Mammary epithelial cell (primary cell): ENCODE measurements at regions of chr4 and their contacts with region 1.

Region 1: GRCh38 chr4:168831919-168832762 is 177.9 kb downstream of the CBR4 start:
- DNase-seq: peak; percentile 86
- H3K4me3 ChIP-seq: peak overlapping the region; percentile 88 to 95 (median 95)
- H3K27ac ChIP-seq: peak overlapping the region; percentile 84
- H3K4me1 ChIP-seq: peaks cover 37% of the 10 kb centered on the region
- H3K27me3 ChIP-seq: no peaks in the 10 kb centered on the region
- CTCF ChIP-seq: no peak

Region 2: DNA sequence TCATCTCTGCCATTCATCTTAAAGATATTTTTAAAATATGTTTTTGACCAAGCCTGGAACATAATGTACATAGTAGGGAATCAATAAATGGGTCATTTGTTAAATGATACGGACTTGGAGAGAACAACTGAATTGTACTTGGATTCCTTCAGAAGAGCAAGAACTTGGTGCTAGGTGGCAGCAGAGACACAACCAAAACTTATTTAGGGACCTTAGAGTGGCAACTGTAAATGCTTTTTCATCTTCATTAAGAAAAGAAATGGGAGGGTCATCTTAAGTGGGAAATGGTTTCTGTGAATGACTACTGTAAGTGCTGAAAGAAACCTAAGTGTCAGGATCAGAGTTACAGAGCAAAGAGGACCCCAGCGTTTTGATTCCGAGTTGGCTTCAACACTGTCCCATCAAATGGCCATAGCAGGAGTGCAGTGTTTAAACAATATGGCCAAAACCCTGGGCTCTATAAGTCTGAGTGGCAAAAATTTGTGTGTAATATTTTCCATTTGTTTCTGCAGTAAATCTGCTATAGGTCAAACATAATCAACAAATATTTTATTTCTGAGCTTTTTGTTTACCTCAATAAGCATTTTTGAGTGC is 121.7 kb before region 1 on chr4:
- CTCF ChIA-PET with region 1: no interaction called
- dilution Hi-C with region 1: no loop called
- in situ Hi-C with region 1: no loop called
- intact Hi-C with region 1: loop called (anchors 1 kb)
- DNase-seq: peak; percentile 54
- H3K4me3 ChIP-seq: no peak overlapping the region
- H3K27ac ChIP-seq: no peak overlapping the region
- H3K4me1 ChIP-seq: peaks cover 33% of the 10 kb centered on the region
- H3K27me3 ChIP-seq: no peaks in the 10 kb centered on the region
- CTCF ChIP-seq: peak; percentile 49 to 74

Region 3: GRCh38 chr4:168758351-168758876 is 73.7 kb before region 1 on chr4:
- CTCF ChIA-PET with region 1: no interaction called
- dilution Hi-C with region 1: no loop called
- in situ Hi-C with region 1: no loop called
- intact Hi-C with region 1: loop called (anchors 2 kb)
- DNase-seq: peak; percentile 82
- H3K4me3 ChIP-seq: no peak overlapping the region
- H3K27ac ChIP-seq: peak overlapping the region; percentile 92
- H3K4me1 ChIP-seq: peaks cover 51% of the 10 kb centered on the region
- H3K27me3 ChIP-seq: no peaks in the 10 kb centered on the region
- CTCF ChIP-seq: no peak

Region 4: DNA sequence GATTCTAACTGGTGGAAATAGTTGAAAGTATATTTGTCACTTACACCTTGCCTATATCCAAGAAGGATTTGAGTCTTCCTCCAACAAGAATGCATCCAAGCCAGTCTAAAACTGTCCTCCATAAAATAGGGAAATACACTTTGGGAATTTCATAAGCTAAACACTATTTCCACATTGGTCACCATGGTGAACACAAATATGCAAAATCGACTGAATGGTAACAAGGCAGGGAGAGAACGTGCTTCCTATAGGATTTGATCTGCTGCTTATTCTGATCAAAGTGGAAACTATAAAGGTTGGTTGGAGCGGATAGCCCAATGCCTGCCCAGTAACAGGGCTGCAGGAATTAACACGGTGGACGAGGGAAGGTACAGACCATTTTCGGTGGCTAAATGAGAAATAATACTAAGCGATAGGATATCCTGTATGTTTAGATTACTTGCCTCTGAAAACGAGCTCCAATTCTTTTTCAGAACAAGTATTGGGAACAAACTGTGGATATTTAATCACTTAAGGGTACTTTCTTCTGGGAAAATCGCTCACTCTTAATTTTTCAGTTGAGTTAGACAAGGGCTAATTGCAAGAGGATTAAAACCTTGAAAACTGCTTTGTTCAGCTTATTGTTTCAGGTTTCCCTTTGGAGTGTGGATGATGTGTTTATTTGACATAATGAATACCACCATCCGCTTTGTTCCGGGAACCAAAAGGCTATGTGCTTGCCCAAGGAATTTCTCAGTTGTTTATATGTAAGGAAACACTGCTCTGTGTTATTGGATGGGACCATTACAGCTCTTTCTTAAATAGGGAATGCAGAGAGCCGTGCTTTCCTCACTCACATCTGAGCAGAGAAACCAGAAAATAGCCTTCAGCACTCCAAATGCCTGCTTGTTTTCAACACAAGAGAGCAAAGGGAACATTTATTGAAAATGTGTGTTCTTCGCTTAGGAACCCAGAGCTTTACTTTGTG is 16.5 kb before region 1 on chr4:
- CTCF ChIA-PET with region 1: interaction called, 3 read pairs
- dilution Hi-C with region 1: no loop called
- in situ Hi-C with region 1: no loop called
- intact Hi-C with region 1: loop called (anchors 1 kb)
- DNase-seq: no peak
- H3K4me3 ChIP-seq: no peak overlapping the region
- H3K27ac ChIP-seq: peak overlapping the region; percentile 58
- H3K4me1 ChIP-seq: peaks cover 39% of the 10 kb centered on the region
- H3K27me3 ChIP-seq: no peaks in the 10 kb centered on the region
- CTCF ChIP-seq: no peak